Heart left ventricle (tissue), 16 donors: ENCODE measurements at regions of chr9 and their contacts with region 1.

Region 1: GRCh38 chr9:30048396-30048795 is 2336.0 kb upstream of the ACO1 start:
- DNase-seq: no peak
- ATAC-seq: no peak
- H3K4me3 ChIP-seq: no peak overlapping the region
- H3K27ac ChIP-seq: no peak overlapping the region
- H3K4me1 ChIP-seq: no peaks in the 10 kb centered on the region
- H3K27me3 ChIP-seq: no peaks in the 10 kb centered on the region
- CTCF ChIP-seq: no peak
- POLR2A ChIP-seq: no peak

Region 2: GRCh38 chr9:30010691-30011090 is 37.7 kb before region 1 on chr9:
- intact Hi-C with region 1: loop called in 1 of 10 experiments (anchors 5 kb)
- DNase-seq: no peak
- ATAC-seq: no peak
- H3K4me3 ChIP-seq: no peak overlapping the region
- H3K27ac ChIP-seq: no peak overlapping the region
- H3K4me1 ChIP-seq: no peaks in the 10 kb centered on the region
- H3K27me3 ChIP-seq: no peaks in the 10 kb centered on the region
- CTCF ChIP-seq: no peak
- POLR2A ChIP-seq: no peak

Region 3: GRCh38 chr9:30504502-30504905 is 456.1 kb after region 1 on chr9:
- intact Hi-C with region 1: no loop called
- DNase-seq: no peak
- ATAC-seq: no peak
- H3K4me3 ChIP-seq: no peak overlapping the region
- H3K27ac ChIP-seq: no peak overlapping the region
- H3K4me1 ChIP-seq: no peaks in the 10 kb centered on the region
- H3K27me3 ChIP-seq: no peaks in the 10 kb centered on the region
- CTCF ChIP-seq: no peak
- POLR2A ChIP-seq: no peak